ENCODE measurements at regions of chr5 and their contacts with region 1.

Region 1: DNA sequence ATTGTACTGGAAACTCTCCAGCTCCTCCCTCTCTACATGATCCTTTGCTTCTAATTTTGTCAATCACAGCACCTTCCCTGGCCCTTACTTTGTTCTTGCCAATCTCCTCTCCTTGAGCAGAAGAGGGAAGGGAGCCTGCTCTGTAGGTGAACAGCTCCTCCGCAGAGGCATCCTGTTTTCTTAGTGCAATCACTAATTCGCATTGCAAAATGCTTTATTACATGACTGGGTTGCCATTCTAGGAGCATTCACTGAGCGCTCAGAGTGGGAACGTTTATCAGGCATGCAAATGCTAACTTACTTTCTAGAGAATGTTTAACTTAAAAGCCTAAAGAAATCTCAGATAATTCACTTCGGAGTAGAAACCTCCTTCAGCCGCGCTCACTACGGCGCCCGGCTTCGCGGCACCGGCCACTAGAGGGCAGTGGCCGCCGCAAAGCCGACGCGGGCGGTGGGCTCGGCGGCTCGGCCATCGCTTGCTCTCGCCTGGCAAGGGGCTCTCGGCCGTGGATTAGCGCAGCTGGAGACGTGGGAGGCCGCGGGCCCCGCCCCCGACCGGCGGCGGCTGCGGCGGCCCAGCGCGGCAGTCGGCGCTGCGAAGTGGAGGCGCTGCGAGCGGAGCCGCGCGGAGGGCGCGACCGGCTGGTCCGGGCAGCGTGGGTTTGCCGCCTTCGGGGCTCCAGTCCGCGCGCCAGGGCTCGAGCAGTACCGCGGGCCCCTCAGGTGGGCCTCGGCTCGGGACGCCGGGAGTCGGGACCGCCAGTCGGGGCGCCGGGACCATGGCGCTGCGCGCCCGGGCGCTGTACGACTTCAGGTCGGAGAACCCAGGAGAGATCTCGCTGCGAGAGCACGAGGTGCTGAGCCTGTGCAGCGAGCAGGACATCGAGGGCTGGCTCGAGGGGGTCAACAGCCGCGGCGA is at the start of gene SNX18:
- DNase-seq: peak; percentile 96
- ATAC-seq: peak; percentile 95
- H3K4me3 ChIP-seq: peak within 1 kb of the TSS; percentile 78 to 88
- H3K27ac ChIP-seq: peak within 1 kb of the TSS; percentile 79 to 95
- H3K4me1 ChIP-seq: no peaks in the 10 kb centered on the region
- H3K27me3 ChIP-seq: no peaks in the 10 kb centered on the region
- total RNA-seq, gene SNX18: 84.4 to 110 TPM

Region 2: GRCh38 chr5:54630738-54631359 is 113.4 kb after region 1 on chr5:
- intact Hi-C with region 1: loop called in 1 of 2 experiments (anchors 2 kb)
- DNase-seq: peak in 1 of 2 donors; percentile 78
- ATAC-seq: peak; percentile 92
- H3K4me3 ChIP-seq: no peak overlapping the region
- H3K27ac ChIP-seq: peak overlapping the region in 1 of 2 donors; percentile 25
- H3K4me1 ChIP-seq: peaks cover 2 to 7% of the 10 kb centered on the region in 2 donors
- H3K27me3 ChIP-seq: no peaks in the 10 kb centered on the region

Region 3: DNA sequence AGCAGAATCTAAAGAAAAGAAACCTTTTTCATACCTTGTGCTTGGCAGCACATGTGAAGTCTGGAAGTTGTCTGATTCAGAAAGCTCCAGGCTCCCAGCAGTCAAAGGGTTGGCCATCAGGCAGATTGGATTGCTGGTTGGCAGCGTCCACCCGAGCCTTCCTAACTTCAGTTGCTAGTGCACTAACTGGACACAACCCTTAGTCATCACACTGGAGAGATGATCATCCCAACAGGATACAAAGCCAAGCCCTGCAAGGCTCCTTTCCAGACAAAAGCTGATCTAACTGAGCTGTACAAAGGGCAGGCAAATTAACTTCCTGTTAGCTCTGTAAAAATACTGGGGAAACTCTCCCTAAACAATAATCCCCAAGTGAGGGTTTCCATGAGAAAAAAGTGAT is 185.7 kb after region 1 on chr5:
- intact Hi-C with region 1: loop called (anchors 5 kb)
- DNase-seq: peak; percentile 84 to 88
- ATAC-seq: peak; percentile 76
- H3K4me3 ChIP-seq: peak overlapping the region in 1 of 2 donors; percentile 38
- H3K27ac ChIP-seq: peak overlapping the region; percentile 96 to 100
- H3K4me1 ChIP-seq: peaks cover 17 to 21% of the 10 kb centered on the region in 2 donors
- H3K27me3 ChIP-seq: no peaks in the 10 kb centered on the region

Region 4: DNA sequence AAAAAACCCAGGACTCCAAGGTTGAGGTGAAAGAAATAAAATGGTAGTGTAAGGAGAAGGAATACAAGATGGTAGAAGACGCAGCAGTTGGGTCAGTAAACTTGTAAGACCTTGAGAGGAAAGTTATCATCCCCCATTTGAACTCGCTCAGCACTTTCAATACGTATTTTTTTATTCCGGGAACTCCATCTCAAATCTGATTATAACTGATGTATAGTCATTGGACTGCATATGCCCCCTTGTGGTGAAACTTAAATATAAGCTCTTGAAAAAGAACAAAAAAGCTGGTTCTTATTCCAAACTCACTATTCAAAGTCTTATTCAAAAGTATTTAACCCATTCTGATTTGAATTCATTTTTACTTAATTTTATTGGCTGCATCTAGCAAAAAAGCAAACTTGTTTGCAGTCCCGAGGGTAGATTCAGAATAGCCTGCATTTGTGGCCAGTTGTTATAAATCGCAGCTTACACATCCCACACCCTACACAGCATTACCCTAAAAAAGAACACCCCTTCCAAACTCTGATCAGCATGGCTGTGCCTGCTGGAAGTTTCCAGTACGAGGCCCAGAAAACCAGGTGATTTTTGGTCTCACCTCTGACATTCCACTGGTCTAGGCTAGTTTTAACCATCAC is 350.0 kb after region 1 on chr5:
- intact Hi-C with region 1: loop called (anchors 1 to 5 kb)
- DNase-seq: no peak
- ATAC-seq: peak; percentile 68
- H3K4me3 ChIP-seq: peak overlapping the region in 1 of 2 donors; percentile 63
- H3K27ac ChIP-seq: no peak overlapping the region
- H3K4me1 ChIP-seq: no peaks in the 10 kb centered on the region
- H3K27me3 ChIP-seq: no peaks in the 10 kb centered on the region

Region 5: GRCh38 chr5:54883374-54884212 is 366.2 kb after region 1 on chr5:
- intact Hi-C with region 1: no loop called
- DNase-seq: peak; percentile 69 to 86
- ATAC-seq: peak; percentile 71
- H3K4me3 ChIP-seq: peak overlapping the region; percentile 11 to 46
- H3K27ac ChIP-seq: no peak overlapping the region
- H3K4me1 ChIP-seq: no peaks in the 10 kb centered on the region
- H3K27me3 ChIP-seq: no peaks in the 10 kb centered on the region